Gastrocnemius medialis (tissue), 4 donors: ENCODE measurements at regions of chr14 and their contacts with region 1.

Region 1: DNA sequence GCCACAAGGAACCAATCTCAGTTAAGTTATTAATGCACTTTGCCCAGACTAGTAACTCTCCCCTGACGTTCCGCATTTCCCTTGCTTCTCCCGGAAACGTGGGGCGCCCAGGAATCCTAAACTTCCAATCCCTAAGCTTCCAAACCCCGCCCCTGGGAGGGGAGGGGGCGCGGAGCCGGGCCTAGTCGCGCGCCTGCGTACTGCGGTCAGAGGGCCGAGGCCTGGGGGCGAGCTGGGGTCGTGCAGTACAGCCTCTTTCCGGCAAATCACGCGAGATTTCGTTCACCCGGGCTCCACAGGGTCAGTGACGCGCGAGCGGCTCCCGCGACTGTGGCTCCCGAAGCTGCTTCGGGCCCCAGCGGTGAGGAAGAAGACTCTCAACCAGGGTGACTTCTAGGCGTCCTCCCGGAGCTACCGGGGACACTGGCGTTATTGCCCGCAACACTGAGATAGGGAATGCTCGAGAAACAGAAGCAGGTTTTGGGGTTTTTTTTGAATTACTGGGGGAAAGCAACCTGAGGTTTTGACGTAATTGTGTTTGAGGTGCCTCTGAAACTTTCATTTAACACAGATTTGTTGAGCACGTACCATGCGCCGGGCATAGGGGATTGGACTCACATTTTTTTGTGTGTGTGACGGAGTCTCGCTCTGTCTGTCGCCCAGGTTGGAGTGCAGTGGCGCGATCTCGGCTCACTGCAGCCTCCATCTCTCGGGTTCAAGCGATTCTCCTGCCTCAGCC is at the start of gene PTGR2:
- DNase-seq: peak; percentile 88 to 94
- ATAC-seq: peak; percentile 89 to 91
- H3K4me3 ChIP-seq: peak within 1 kb of the TSS; percentile 59 to 77 (median 69)
- H3K27ac ChIP-seq: peak within 1 kb of the TSS; percentile 87 to 93 (median 92)
- H3K4me1 ChIP-seq: peaks cover 0 to 4% of the 10 kb centered on the region in 2 donors
- H3K27me3 ChIP-seq: no peaks in the 10 kb centered on the region
- CTCF ChIP-seq: peak in 4 of 5 experiments; percentile 19 to 36 (median 26)
- POLR2A ChIP-seq: peak; percentile 68 to 71
- total RNA-seq, gene PTGR2: 5.6 to 15.7 (median 9.9) TPM

Region 2: DNA sequence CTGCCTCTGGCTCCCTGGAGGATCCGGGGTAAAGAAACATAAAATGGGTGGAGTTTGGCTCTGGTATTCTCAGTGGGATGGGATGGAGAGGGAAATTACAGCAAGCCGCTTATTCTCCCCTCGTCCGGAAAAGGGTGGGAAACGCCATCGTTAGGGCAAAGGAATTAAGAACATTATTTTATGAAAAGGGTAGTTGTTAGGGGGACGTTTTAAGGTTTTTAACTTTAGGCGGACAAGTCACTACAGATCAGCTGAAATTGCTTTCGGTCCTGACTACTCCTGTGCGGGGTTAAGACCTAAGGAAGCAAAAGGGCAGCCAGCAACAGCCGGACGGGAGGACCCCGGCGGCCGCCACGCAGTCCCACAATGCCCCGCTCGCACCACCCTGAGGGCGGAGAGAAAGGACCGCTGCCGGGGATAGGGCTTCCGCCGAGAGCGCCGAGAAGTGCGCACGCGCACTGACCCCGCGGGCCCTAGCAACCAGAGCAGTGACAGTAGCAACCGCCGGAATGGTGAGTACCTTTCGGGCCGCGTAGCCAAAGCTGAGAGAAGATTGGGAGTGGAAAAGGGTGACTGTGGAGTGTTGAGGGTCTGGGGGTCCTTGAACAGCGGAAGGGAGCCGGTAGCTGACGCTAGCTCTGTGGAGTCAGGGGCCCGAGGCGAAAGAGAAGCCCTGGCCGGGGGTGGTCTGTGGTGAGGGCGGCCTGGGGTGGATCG is 207.1 kb before region 1 on chr14 and contains the start of gene DNAL1:
- in situ Hi-C with region 1: no loop called
- intact Hi-C with region 1: loop called (anchors 10 kb)
- DNase-seq: peak; percentile 79 to 90
- ATAC-seq: peak; percentile 97 to 99
- H3K4me3 ChIP-seq: peak within 1 kb of the TSS; percentile 85 to 92 (median 92)
- H3K27ac ChIP-seq: peak within 1 kb of the TSS; percentile 84 to 94 (median 89)
- H3K4me1 ChIP-seq: peaks cover 11 to 17% of the 10 kb centered on the region in 2 donors
- H3K27me3 ChIP-seq: no peaks in the 10 kb centered on the region
- CTCF ChIP-seq: peak in 1 of 5 experiments; percentile 14
- POLR2A ChIP-seq: peak; percentile 37 to 49
- total RNA-seq, gene DNAL1: 6.4 to 8.2 (median 7.7) TPM

Region 3: GRCh38 chr14:73886449-73887317 is 34.9 kb after region 1 on chr14 and contains the start of gene ZNF410:
- in situ Hi-C with region 1: no loop called
- intact Hi-C with region 1: loop called (anchors 1 kb)
- DNase-seq: peak; percentile 92
- ATAC-seq: peak; percentile 95 to 96
- H3K4me3 ChIP-seq: peak within 1 kb of the TSS; percentile 79 to 100 (median 84)
- H3K27ac ChIP-seq: peak within 1 kb of the TSS; percentile 84 to 98 (median 92)
- H3K4me1 ChIP-seq: peaks cover 30 to 31% of the 10 kb centered on the region in 2 donors
- H3K27me3 ChIP-seq: no peaks in the 10 kb centered on the region
- CTCF ChIP-seq: peak in 1 of 5 experiments; percentile 11
- POLR2A ChIP-seq: peak; percentile 72 to 78
- total RNA-seq, gene ZNF410: 22.6 to 33.2 (median 24.0) TPM